ENCODE measurements at regions of chr1 and their contacts with region 1.

Region 1: GRCh38 chr1:6185635-6186382 is 5.7 kb upstream of the CHD5 start:
- DNase-seq: peak; percentile 58
- ATAC-seq: no peak
- H3K4me3 Mint-ChIP-seq: no peak overlapping the region
- H3K27ac Mint-ChIP-seq: no peak overlapping the region
- H3K4me1 Mint-ChIP-seq: peaks cover 57% of the 10 kb centered on the region
- H3K27me3 Mint-ChIP-seq: peaks cover 12% of the 10 kb centered on the region
- CTCF ChIP-seq: peak; percentile 56

Region 2: GRCh38 chr1:6199298-6200187 is 13.7 kb after region 1 on chr1 and contains the start of gene RPL22:
- CTCF ChIA-PET with region 1: interaction called, 14 read pairs
- POLR2A ChIA-PET with region 1: interaction called, 32 read pairs
- intact Hi-C with region 1: no loop called
- DNase-seq: peak; percentile 100
- ATAC-seq: peak; percentile 99
- H3K4me3 Mint-ChIP-seq: peak within 1 kb of the TSS; percentile 94
- H3K27ac Mint-ChIP-seq: peak within 1 kb of the TSS; percentile 90
- H3K4me1 Mint-ChIP-seq: peaks cover 43% of the 10 kb centered on the region
- H3K27me3 Mint-ChIP-seq: peaks cover 2% of the 10 kb centered on the region
- CTCF ChIP-seq: no peak
- total RNA-seq, gene RPL22: 372 to 473 TPM